ENCODE measurements at regions of chr3 and their contacts with region 1.

Region 1: DNA sequence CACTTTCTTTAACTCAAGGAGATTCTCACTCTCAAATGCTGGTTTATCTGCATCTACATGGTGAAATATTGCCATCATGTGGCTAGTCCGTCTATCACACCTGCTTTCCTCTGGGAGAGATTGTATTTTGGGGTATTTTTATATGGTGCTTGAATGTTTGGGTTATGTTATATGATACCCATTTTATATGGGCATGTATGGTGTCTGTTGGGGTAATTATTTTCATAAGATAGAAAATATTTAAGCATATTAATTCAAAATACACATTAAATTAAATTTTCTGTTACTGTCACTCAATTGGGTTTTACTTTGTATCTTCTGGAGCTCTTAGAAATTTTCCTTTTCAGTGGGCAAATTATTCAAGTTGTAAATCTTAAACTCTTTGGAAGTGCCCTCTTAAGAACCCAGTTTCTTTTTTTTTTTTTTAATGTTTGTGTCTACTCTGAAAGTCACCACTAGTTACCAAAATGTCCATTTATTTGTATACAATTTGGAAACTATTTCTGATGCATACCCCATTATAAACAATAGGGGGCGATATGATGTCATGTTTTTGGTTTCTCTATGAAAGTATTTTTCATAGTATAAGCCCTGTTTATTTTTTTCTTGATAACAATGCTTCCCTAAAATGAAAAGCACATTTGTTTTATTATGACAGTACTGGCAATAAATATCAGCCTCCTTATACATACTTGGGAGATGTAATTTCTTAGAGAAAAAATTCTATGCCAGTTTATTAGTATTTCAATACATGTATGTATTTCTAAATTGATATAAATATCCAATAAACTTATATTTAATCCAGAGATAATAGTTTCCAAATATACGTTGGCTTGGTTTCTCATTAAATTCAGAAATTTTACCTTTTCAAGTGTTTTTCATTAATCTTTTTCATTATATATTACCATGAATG is 36.1 kb upstream of the PLSCR5 start:
- DNase-seq: no peak
- H3K4me3 Mint-ChIP-seq: no peak overlapping the region
- H3K27ac Mint-ChIP-seq: no peak overlapping the region
- H3K4me1 Mint-ChIP-seq: no peaks in the 10 kb centered on the region
- H3K27me3 Mint-ChIP-seq: no peaks in the 10 kb centered on the region

Region 2: DNA sequence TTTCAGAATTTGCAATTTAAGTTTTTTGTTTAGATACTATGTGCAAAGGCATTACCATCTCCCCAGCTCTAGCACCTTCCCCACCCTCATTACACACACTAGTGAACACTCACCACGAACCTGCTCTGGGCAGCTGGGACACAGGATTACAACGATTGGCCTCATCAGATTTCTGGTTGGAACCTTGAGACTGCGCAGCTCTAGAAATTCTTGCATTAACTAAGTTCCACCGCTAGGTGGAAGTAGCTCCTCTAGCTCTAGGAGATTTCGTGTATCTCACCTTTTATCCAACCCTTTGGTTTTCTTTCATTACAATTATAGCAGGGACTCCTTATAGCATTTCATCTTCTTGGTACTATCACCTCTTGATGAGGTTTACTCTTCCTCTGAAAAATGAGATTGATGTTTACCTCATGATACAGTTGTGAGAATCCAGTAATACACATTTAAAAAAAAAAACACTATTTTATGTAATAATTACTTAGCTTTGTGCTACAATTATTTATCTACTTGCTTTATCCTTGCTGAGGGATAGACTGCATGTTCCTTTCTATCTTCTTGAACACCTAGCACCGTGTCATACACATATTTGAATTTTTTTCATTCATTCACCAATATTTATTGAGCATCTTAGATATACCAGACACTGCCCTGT is 451.6 kb before region 1 on chr3:
- intact Hi-C with region 1: loop called (anchors 1 kb)
- DNase-seq: no peak
- H3K4me3 Mint-ChIP-seq: no peak overlapping the region
- H3K27ac Mint-ChIP-seq: no peak overlapping the region
- H3K4me1 Mint-ChIP-seq: no peaks in the 10 kb centered on the region
- H3K27me3 Mint-ChIP-seq: no peaks in the 10 kb centered on the region

Region 3: GRCh38 chr3:146218880-146219866 is 422.0 kb before region 1 on chr3:
- intact Hi-C with region 1: loop called (anchors 2 kb)
- DNase-seq: no peak
- H3K4me3 Mint-ChIP-seq: no peak overlapping the region
- H3K27ac Mint-ChIP-seq: no peak overlapping the region
- H3K4me1 Mint-ChIP-seq: no peaks in the 10 kb centered on the region
- H3K27me3 Mint-ChIP-seq: no peaks in the 10 kb centered on the region

Region 4: GRCh38 chr3:146594843-146595482 is 46.2 kb before region 1 on chr3:
- intact Hi-C with region 1: loop called (anchors 2 kb)
- DNase-seq: no peak
- H3K4me3 Mint-ChIP-seq: no peak overlapping the region
- H3K27ac Mint-ChIP-seq: no peak overlapping the region
- H3K4me1 Mint-ChIP-seq: no peaks in the 10 kb centered on the region
- H3K27me3 Mint-ChIP-seq: peaks cover 9% of the 10 kb centered on the region

Region 5: DNA sequence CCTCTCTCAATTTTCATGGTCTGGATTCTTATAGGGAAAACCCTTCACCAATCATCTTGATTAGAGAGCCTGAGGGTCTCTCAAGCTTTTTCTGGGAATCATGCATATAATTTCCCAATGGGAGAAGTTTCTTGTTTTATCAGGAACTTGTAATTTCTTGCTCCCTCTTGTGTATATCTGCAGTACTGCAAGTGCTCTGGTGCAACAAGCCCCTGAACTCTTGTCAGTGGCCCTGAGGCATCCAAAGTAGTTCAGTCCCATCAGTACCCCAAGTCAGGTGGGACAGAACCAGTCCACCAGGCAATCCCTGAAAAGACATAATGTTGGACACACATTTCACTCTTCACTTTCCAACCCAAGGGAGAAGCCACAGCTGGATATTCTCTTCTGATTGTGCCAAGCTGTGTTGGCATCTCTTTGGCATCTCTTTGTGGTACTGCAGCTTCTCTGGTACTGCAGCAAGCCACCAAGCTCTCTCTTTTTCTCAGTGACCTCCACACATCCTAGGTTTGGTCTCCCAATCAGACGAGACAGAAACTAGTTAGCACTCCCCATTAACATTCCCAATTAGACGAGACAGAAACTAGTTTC is 550.7 kb after region 1 on chr3:
- intact Hi-C with region 1: loop called (anchors 5 kb)
- DNase-seq: no peak
- H3K4me3 Mint-ChIP-seq: no peak overlapping the region
- H3K27ac Mint-ChIP-seq: no peak overlapping the region
- H3K4me1 Mint-ChIP-seq: no peaks in the 10 kb centered on the region
- H3K27me3 Mint-ChIP-seq: no peaks in the 10 kb centered on the region

Measured in activated T-helper 2 cell treated with anti-CD3 and anti-CD28 coated beads, Interferon-gamma antibody, Interleukin-2, Interleukin-4, amounts not matched to agents 10 μg/mL and 5 μg/mL and 100 μg/mL, durations not matched to agents 14 hours and 24 hours and 36 hours (primary cell).